Activated B cell treated with CpG ODN at 0.5 μM for 24 hours (primary cell): ENCODE measurements at regions of chr21 and their contacts with region 1.

Region 1: GRCh38 chr21:25487046-25487594 is 120.2 kb downstream of the MRPL39 start:
- DNase-seq: no peak
- ATAC-seq: peak; percentile 85
- H3K4me3 Mint-ChIP-seq: peak overlapping the region; percentile 49
- H3K27ac Mint-ChIP-seq: peak overlapping the region; percentile 90
- H3K4me1 Mint-ChIP-seq: peaks cover 73% of the 10 kb centered on the region
- H3K27me3 Mint-ChIP-seq: no peaks in the 10 kb centered on the region
- CTCF ChIP-seq: no peak

Region 2: DNA sequence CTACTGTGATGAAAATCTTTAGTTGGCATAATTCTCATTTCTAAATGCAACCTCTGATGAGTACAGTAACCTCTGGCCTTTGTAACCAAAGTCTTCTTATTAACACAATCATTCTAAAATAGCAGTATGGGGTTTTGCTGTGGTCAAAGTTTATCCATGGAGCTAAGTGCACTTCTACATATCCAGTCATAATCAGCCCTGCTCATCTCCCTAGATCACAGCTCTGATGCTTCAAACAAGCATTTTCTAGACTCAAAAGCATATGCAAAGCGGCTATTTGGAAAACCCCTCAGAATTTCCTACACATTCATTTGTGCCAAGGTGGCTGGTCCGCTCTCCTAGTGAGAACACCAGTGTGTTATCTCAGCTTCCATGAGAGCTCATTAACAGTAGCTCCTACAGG is 298.4 kb before region 1 on chr21:
- CTCF ChIA-PET with region 1: no interaction called
- POLR2A ChIA-PET with region 1: no interaction called
- intact Hi-C with region 1: loop called (anchors 10 kb)
- DNase-seq: no peak
- ATAC-seq: peak; percentile 72
- H3K4me3 Mint-ChIP-seq: peak overlapping the region; percentile 44
- H3K27ac Mint-ChIP-seq: peak overlapping the region; percentile 73
- H3K4me1 Mint-ChIP-seq: peaks cover 68% of the 10 kb centered on the region
- H3K27me3 Mint-ChIP-seq: no peaks in the 10 kb centered on the region
- CTCF ChIP-seq: no peak

Region 3: GRCh38 chr21:25428537-25428936 is 58.6 kb before region 1 on chr21:
- CTCF ChIA-PET with region 1: no interaction called
- POLR2A ChIA-PET with region 1: interaction called, 28 read pairs
- intact Hi-C with region 1: loop called (anchors 1 kb)
- DNase-seq: no peak
- ATAC-seq: peak; percentile 15
- H3K4me3 Mint-ChIP-seq: peak overlapping the region; percentile 35
- H3K27ac Mint-ChIP-seq: peak overlapping the region; percentile 65
- H3K4me1 Mint-ChIP-seq: peaks cover 53% of the 10 kb centered on the region
- H3K27me3 Mint-ChIP-seq: no peaks in the 10 kb centered on the region
- CTCF ChIP-seq: no peak

Region 4: DNA sequence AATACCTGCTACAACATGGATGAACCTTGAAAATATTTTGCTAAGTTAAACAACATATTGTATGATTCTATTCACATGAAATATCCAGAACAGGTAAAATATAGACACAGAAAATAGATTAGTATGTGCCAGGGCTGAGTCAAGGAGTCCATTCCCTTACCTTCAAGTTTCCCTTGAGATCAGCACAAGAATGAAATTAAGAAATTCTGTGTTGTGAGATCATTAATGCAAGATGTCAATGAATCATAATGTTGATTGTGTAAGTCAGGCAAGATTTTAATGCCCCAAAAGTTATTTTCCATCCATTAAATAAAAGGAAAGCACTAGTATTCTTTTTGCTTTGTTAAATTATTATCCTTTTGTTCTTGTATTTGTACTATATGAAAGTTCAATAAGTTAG is 19.2 kb before region 1 on chr21:
- CTCF ChIA-PET with region 1: interaction called, 3 read pairs
- POLR2A ChIA-PET with region 1: no interaction called
- intact Hi-C with region 1: loop called (anchors 2 kb)
- DNase-seq: no peak
- ATAC-seq: no peak
- H3K4me3 Mint-ChIP-seq: no peak overlapping the region
- H3K27ac Mint-ChIP-seq: no peak overlapping the region
- H3K4me1 Mint-ChIP-seq: peaks cover 17% of the 10 kb centered on the region
- H3K27me3 Mint-ChIP-seq: no peaks in the 10 kb centered on the region
- CTCF ChIP-seq: no peak

Region 5: GRCh38 chr21:25509862-25510261 is 22.7 kb after region 1 on chr21:
- CTCF ChIA-PET with region 1: interaction called, 6 read pairs
- POLR2A ChIA-PET with region 1: interaction called, 3 read pairs
- intact Hi-C with region 1: loop called (anchors 2 kb)
- DNase-seq: no peak
- ATAC-seq: peak; percentile 77
- H3K4me3 Mint-ChIP-seq: peak overlapping the region; percentile 55
- H3K27ac Mint-ChIP-seq: peak overlapping the region; percentile 63
- H3K4me1 Mint-ChIP-seq: peaks cover 45% of the 10 kb centered on the region
- H3K27me3 Mint-ChIP-seq: no peaks in the 10 kb centered on the region
- CTCF ChIP-seq: no peak

Region 6: DNA sequence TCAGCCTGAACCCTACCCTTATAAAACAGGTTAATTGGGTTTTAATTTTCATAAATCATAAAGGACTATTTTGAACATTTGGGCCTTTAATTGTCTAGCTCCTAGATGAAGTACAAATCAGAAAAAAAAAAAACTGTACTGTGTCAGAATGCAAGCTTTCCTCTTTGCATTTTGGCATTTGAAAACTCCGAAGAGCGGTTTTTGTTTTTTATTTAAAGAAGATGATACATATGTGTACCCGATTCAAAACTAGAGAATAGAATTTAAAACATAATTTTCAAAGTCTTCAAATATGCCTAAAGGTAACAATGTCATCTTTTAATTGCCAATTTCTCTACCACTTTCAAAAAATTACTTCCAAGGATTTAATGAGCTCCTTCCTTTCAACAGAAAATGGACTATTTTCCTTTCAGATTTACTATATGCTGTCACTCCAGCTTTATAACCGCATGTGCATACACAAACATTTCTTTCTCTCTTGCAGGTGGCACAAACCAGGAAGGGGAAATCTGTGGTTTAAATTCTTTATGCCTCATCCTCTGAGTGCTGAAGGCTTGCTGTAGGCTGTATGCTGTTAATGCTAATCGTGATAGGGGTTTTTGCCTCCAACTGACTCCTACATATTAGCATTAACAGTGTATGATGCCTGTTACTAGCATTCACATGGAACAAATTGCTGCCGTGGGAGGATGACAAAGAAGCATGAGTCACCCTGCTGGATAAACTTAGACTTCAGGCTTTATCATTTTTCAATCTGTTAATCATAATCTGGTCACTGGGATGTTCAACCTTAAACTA is 86.5 kb after region 1 on chr21:
- CTCF ChIA-PET with region 1: interaction called, 5 read pairs
- POLR2A ChIA-PET with region 1: interaction called, 22 read pairs
- intact Hi-C with region 1: loop called (anchors 1 kb)
- DNase-seq: no peak
- ATAC-seq: peak; percentile 53
- H3K4me3 Mint-ChIP-seq: peak overlapping the region; percentile 75
- H3K27ac Mint-ChIP-seq: peak overlapping the region; percentile 90
- H3K4me1 Mint-ChIP-seq: peaks cover 90% of the 10 kb centered on the region
- H3K27me3 Mint-ChIP-seq: no peaks in the 10 kb centered on the region
- CTCF ChIP-seq: no peak

Region 7: DNA sequence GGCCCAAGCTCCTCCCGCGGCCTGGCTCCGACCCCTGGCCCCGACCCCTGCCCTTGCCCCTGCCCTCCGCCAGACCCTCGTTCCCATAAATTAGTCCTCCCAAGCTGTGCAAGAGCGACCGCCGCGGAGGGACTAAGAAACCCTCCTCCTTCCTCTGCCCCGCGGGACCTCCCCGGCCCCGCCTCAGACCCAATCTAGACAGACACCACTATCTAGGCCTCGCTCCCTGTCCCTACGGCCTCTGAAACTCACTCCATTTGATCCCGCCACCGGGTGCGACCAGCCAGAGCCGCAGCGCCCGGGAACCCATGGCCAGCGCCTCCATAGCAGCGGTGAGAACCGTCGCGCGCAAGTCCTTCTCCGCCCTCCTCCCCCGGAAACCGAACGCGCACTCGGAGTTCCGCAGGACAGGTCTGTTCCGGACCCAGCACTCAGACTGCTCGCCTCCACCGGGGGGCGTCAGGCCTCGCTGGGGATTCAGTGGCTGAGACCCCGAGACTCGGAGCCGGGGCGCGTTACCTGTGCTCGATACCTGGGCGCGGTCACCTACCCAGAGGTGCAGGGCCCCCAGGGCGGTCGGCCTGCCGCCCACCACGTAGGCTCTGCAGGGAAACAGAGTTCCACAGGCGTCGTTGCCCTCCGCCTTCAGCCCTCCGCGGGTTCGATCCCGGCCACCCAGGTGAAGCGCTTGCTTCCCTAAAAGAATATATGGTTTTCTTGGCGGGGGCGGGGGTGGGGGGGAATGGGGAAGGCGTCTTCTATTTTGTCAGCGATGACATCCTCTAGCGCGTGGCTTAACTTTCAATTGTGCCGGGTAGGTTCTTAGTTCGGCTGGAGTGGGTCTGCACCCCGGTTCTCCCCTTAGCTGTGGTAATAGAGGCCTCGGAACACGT is 120.3 kb after region 1 on chr21 and contains the start of gene MRPL39:
- CTCF ChIA-PET with region 1: no interaction called
- POLR2A ChIA-PET with region 1: no interaction called
- intact Hi-C with region 1: no loop called
- DNase-seq: peak; percentile 85
- ATAC-seq: peak; percentile 89
- H3K4me3 Mint-ChIP-seq: peak within 1 kb of the TSS; percentile 100
- H3K27ac Mint-ChIP-seq: peak within 1 kb of the TSS; percentile 99
- H3K4me1 Mint-ChIP-seq: peaks cover 35% of the 10 kb centered on the region
- H3K27me3 Mint-ChIP-seq: no peaks in the 10 kb centered on the region
- CTCF ChIP-seq: no peak
- total RNA-seq, gene MRPL39: 43.6 and 46.3 TPM in 2 replicates